Heart right ventricle (tissue), 16 donors: ENCODE measurements at regions of chr15 and their contacts with region 1.

Region 1: GRCh38 chr15:34437687-34438086 is at the start of gene GOLGA8A:
- DNase-seq: peak; percentile 56 to 81
- ATAC-seq: peak in 6 of 8 donors; percentile 44 to 73 (median 62)
- H3K4me3 ChIP-seq: peak within 1 kb of the TSS; percentile 9 to 68 (median 64)
- H3K27ac ChIP-seq: peak within 1 kb of the TSS in 5 of 10 donors; percentile 28 to 65 (median 58)
- H3K4me1 ChIP-seq: peaks cover 0 to 22% (median 6%) of the 10 kb centered on the region in 9 donors
- H3K27me3 ChIP-seq: peaks cover 0 to 41% (median 0%) of the 10 kb centered on the region in 7 donors
- CTCF ChIP-seq: no peak
- total RNA-seq, gene GOLGA8A: 7.6 to 20.5 (median 11.5) TPM

Region 2: GRCh38 chr15:34337557-34338306 is 100.0 kb before region 1 on chr15 and contains the start of gene SLC12A6:
- intact Hi-C with region 1: no loop called
- DNase-seq: peak; percentile 89 to 93
- ATAC-seq: peak; percentile 94 to 98 (median 96)
- H3K4me3 ChIP-seq: peak within 1 kb of the TSS; percentile 79 to 95 (median 92)
- H3K27ac ChIP-seq: peak within 1 kb of the TSS; percentile 83 to 99 (median 94)
- H3K4me1 ChIP-seq: peaks cover 7 to 86% (median 50%) of the 10 kb centered on the region in 9 donors
- H3K27me3 ChIP-seq: no peaks in the 10 kb centered on the region
- CTCF ChIP-seq: peak in 2 of 9 donors; percentile 8 to 11
- total RNA-seq, gene SLC12A6: 20.0 to 33.6 (median 26.0) TPM

Region 3: GRCh38 chr15:34501131-34501530 is 63.4 kb after region 1 on chr15:
- intact Hi-C with region 1: loop called in 1 of 10 experiments (anchors 10 kb)
- DNase-seq: no peak
- ATAC-seq: no peak
- H3K4me3 ChIP-seq: no peak overlapping the region
- H3K27ac ChIP-seq: no peak overlapping the region
- H3K4me1 ChIP-seq: peaks cover 0 to 8% (median 0%) of the 10 kb centered on the region in 9 donors
- H3K27me3 ChIP-seq: peaks cover 0 to 32% (median 7%) of the 10 kb centered on the region in 7 donors
- CTCF ChIP-seq: no peak